HepG2 (cell line): ENCODE measurements at regions of chr1 and their contacts with region 1.

Region 1: DNA sequence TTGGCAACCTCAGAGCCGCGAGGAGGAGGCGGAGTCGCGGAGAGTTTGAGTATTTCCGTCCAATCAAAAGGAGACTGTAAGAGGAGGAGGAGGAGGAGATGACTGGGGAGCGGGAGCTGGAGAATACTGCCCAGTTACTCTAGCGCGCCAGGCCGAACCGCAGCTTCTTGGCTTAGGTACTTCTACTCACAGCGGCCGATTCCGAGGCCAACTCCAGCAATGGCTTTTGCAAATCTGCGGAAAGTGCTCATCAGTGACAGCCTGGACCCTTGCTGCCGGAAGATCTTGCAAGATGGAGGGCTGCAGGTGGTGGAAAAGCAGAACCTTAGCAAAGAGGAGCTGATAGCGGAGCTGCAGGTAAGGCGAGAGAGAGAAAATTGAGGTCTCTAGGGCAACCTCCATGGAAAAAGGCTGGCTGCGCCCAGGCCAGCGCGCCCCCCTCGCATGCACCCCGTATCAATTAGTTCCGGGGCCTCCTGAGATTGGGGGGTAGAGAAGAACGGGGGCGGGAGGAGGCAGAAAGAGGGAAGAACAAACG is at the start of gene PHGDH:
- DNase-seq: peak; percentile 76
- ATAC-seq: peak; percentile 82
- H3K4me3 ChIP-seq: peak within 1 kb of the TSS; percentile 67 to 94 (median 90)
- H3K27ac ChIP-seq: peak within 1 kb of the TSS; percentile 84
- H3K4me1 ChIP-seq: peaks cover 41% of the 10 kb centered on the region
- H3K27me3 ChIP-seq: peaks cover 0 to 5% of the 10 kb centered on the region in 2 experiments; a peak in 2 of 5 replicates
- CTCF ChIP-seq: no peak
- EP300 ChIP-seq: no peak
- POLR2A ChIP-seq: peak; percentile 94 to 96
- RAD21 ChIP-seq: no peak
- total RNA-seq, gene PHGDH: 133 and 163 TPM in 2 replicates

Region 2: DNA sequence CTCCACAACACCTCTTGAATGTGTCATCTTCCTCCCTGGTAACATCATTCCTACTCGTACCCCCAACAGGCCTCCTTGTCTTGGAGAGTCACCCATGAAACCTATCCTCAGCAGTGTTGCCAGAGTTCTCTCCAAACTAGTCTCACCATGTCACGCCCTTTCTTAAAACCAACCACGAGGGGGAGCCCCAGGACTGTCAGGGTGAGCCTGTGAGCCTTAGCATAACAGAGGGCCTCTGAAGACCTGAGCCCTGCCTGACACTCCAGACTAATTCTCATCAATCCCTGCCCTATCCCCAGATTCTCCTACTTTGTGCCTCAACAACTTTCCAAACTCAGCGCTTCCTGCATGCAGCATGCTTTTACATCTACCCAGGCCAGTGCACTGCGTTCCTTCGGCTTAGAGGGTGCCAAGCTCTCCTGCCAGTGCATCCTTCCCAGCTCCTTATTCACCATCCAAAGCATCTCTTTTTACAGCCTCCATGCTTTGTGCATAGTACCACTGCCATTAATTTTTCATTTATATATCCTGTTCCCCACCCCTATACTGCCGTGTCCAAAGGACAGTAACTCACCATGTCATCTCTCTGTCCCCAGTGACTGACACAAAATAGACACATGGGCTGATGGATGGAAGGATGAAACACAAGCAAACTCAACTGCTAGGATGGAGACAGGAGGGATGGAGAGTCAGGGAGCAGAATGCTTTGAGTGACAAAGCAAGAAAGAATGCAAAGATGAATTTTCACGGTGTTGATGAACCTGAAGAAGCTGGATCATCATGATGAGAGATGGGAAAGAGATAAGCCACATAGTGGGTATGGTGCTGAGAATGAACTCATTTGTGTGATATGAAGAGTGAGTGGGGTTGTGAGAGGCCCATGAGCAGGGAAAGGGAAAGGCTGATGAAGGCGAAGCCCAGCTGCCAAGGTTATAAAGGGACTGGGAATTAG is 97.8 kb before region 1 on chr1:
- CTCF ChIA-PET with region 1: no interaction called
- POLR2A ChIA-PET with region 1: interaction called, 4 read pairs
- in situ Hi-C with region 1: no loop called
- intact Hi-C with region 1: loop called (anchors 2 kb)
- DNase-seq: peak; percentile 78
- ATAC-seq: peak; percentile 93
- H3K4me3 ChIP-seq: no peak overlapping the region
- H3K27ac ChIP-seq: no peak overlapping the region
- H3K4me1 ChIP-seq: peaks cover 9% of the 10 kb centered on the region
- H3K27me3 ChIP-seq: no peaks in the 10 kb centered on the region
- CTCF ChIP-seq: peak; percentile 95
- EP300 ChIP-seq: no peak
- POLR2A ChIP-seq: no peak
- RAD21 ChIP-seq: peak; percentile 93

Region 3: GRCh38 chr1:119647734-119648619 is 63.9 kb before region 1 on chr1 and contains the start of gene ZNF697:
- CTCF ChIA-PET with region 1: no interaction called
- POLR2A ChIA-PET with region 1: interaction called, 25 read pairs
- in situ Hi-C with region 1: loop called (anchors 10 kb)
- intact Hi-C with region 1: no loop called
- DNase-seq: peak; percentile 92
- ATAC-seq: peak; percentile 94
- H3K4me3 ChIP-seq: peak within 1 kb of the TSS; percentile 74 to 98 (median 97)
- H3K27ac ChIP-seq: peak within 1 kb of the TSS; percentile 76
- H3K4me1 ChIP-seq: peaks cover 43% of the 10 kb centered on the region
- H3K27me3 ChIP-seq: peaks cover 0 to 24% of the 10 kb centered on the region in 2 experiments; a peak in 2 of 5 replicates
- CTCF ChIP-seq: peak; percentile 42
- EP300 ChIP-seq: no peak
- POLR2A ChIP-seq: peak; percentile 75 to 79
- RAD21 ChIP-seq: peak; percentile 38
- total RNA-seq, gene ZNF697: 7.1 and 7.3 TPM in 2 replicates

Region 4: GRCh38 chr1:119675349-119676345 is 36.2 kb before region 1 on chr1:
- CTCF ChIA-PET with region 1: no interaction called
- POLR2A ChIA-PET with region 1: interaction called, 17 read pairs
- in situ Hi-C with region 1: no loop called
- intact Hi-C with region 1: no loop called
- DNase-seq: peak; percentile 82
- ATAC-seq: peak; percentile 86
- H3K4me3 ChIP-seq: peak overlapping the region; percentile 43 to 63 (median 57)
- H3K27ac ChIP-seq: no peak overlapping the region
- H3K4me1 ChIP-seq: peaks cover 39% of the 10 kb centered on the region
- H3K27me3 ChIP-seq: no peaks in the 10 kb centered on the region; a peak in 1 of 5 replicates
- CTCF ChIP-seq: peak; percentile 79
- EP300 ChIP-seq: no peak
- POLR2A ChIP-seq: no peak
- RAD21 ChIP-seq: peak; percentile 33; the same call in 1 of the 2 replicates

Region 5: DNA sequence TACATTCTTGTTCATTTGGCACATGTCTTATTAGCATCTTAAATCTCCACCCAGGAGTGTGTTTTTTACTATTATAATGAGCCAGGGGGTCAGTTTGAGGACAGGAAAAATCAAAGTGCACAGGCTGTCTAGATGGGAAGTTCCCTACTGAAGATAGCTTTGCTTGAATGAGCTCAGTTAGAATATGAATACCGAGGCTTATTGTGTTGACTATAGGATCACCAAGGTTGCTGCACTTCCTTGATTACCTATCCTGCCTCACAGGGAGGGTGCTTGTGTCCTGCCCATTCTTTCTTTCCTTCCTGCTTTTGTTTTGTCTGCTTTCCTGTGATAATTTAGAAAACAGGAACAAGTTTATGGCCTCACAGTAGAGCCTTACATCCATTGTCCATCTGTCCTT is 16.1 kb after region 1 on chr1:
- CTCF ChIA-PET with region 1: interaction called, 3 read pairs
- POLR2A ChIA-PET with region 1: interaction called, 88 read pairs
- in situ Hi-C with region 1: no loop called
- intact Hi-C with region 1: loop called (anchors 1 kb)
- DNase-seq: no peak
- ATAC-seq: no peak
- H3K4me3 ChIP-seq: no peak overlapping the region
- H3K27ac ChIP-seq: peak overlapping the region; percentile 66
- H3K4me1 ChIP-seq: peaks cover 100% of the 10 kb centered on the region
- H3K27me3 ChIP-seq: no peaks in the 10 kb centered on the region
- CTCF ChIP-seq: no peak
- EP300 ChIP-seq: no peak
- POLR2A ChIP-seq: no peak
- RAD21 ChIP-seq: no peak